ENCODE measurements at regions of chr2 and their contacts with region 1.

Region 1: GRCh38 chr2:236852100-236852978 is 233.3 kb upstream of the COPS8 start:
- DNase-seq: no peak
- ATAC-seq: no peak
- H3K4me3 ChIP-seq: no peak overlapping the region
- H3K27ac ChIP-seq: no peak overlapping the region
- H3K4me1 ChIP-seq: no peaks in the 10 kb centered on the region
- H3K27me3 ChIP-seq: no peaks in the 10 kb centered on the region; the same call in 1 of the 2 replicates
- CTCF ChIP-seq: no peak

Region 2: GRCh38 chr2:236956038-236956618 is 103.8 kb after region 1 on chr2:
- CTCF ChIA-PET with region 1: no interaction called
- POLR2A ChIA-PET with region 1: no interaction called
- in situ Hi-C with region 1: no loop called
- intact Hi-C with region 1: no loop called
- DNase-seq: no peak
- ATAC-seq: no peak
- H3K4me3 ChIP-seq: no peak overlapping the region
- H3K27ac ChIP-seq: no peak overlapping the region
- H3K4me1 ChIP-seq: no peaks in the 10 kb centered on the region
- H3K27me3 ChIP-seq: peaks cover 12% of the 10 kb centered on the region
- CTCF ChIP-seq: no peak

Region 3: DNA sequence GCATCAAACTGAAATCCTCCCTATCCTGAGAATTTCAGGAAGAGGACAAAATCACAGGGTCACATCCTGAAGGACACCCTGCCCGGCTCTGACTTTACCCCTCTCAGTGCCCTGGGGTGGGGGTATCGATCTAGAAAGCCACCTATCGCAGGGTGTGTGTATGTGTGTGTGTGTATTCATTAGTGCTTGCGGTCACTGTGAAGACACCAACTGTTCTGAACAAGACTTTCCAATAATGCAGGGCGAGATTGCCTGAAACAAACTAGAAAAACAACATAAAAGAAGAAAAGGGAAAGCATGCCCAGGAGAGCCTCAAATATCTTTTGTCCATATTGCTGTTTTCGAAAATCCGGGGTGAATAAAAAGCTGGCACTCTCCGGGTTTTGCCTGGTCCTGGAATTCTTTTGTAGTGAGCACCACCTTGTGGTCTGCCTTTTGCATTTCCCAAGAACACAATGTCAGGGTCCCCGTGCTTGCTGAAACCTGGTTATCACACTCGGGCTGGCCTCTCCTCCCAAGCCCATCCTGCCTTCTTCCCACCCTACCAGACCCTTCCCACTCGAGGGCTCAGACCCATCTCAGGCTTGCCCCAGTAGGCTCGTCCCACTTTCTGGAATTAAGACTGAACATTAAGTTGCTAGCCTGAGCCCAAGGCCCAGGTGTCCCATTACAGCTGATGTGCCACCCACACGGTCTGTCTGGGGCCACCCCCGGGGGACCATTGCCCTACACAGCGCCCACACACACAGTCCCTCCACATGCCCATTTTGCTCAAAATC is 208.4 kb after region 1 on chr2:
- CTCF ChIA-PET with region 1: interaction called, 11 read pairs
- POLR2A ChIA-PET with region 1: no interaction called
- in situ Hi-C with region 1: no loop called
- intact Hi-C with region 1: no loop called
- DNase-seq: peak; percentile 45
- ATAC-seq: peak; percentile 87
- H3K4me3 ChIP-seq: no peak overlapping the region
- H3K27ac ChIP-seq: no peak overlapping the region
- H3K4me1 ChIP-seq: no peaks in the 10 kb centered on the region; the same call in 1 of the 2 replicates
- H3K27me3 ChIP-seq: 0 out of 2 replicates have a peak, but pooled peaks cover 2% of the 10 kb centered on the region
- CTCF ChIP-seq: peak; percentile 84

Measured in Panc1 (cell line).